Activated CD4-positive, alpha-beta memory T cell treated with anti-CD3 and anti-CD28 coated beads, Interleukin-2, amount 10 ng/mL, durations not matched to agents 7 days and 5 days (primary cell): ENCODE measurements at regions of chr1 and their contacts with region 1.

Region 1: GRCh38 chr1:111227851-111228747 is 586 bp downstream of the CHI3L2 start:
- DNase-seq: no peak
- H3K4me3 Mint-ChIP-seq: no peak overlapping the region
- H3K27ac Mint-ChIP-seq: no peak overlapping the region
- H3K4me1 Mint-ChIP-seq: peaks cover 59% of the 10 kb centered on the region
- H3K27me3 Mint-ChIP-seq: no peaks in the 10 kb centered on the region

Region 2: GRCh38 chr1:111127923-111128643 is 100.0 kb before region 1 on chr1:
- CTCF ChIA-PET with region 1: no interaction called
- POLR2A ChIA-PET with region 1: no interaction called
- DNase-seq: no peak
- H3K4me3 Mint-ChIP-seq: no peak overlapping the region
- H3K27ac Mint-ChIP-seq: no peak overlapping the region
- H3K4me1 Mint-ChIP-seq: peaks cover 20% of the 10 kb centered on the region
- H3K27me3 Mint-ChIP-seq: no peaks in the 10 kb centered on the region

Region 3: DNA sequence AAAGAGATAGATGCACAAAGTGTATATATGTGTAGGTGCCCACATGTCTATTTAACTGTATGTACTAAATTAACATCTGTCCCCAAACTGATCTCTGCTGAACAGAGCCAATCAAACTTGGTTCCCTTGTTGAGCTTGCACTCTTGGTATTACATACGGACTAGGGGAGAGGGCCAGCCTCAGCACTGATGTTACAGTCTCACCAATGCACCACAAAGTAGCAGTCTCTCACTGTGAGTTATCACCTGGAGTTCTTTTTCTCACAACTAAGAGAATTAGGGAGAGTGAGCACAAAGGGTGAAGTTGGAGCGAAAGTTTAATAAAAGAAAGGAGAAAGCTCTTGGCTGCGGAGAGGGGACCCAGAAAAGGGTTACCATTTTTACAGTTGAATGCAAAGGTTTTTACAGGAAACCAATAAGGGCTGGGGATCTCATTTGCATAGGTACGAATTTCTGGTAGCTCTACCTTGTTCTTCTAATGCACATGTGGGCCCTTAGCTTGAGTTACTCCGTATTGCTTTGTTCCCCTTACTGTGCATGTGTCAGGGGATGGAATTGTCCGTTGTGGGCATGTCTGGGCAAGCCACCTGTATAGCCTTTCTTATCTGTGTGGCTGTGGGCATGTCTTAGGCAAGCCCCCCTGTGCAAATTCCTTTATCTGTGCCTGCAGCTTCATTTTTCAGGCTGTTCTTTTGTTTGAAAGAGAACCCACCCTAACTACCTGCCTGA is 13.9 kb before region 1 on chr1:
- CTCF ChIA-PET with region 1: interaction called, 17 read pairs
- POLR2A ChIA-PET with region 1: interaction called, 28 read pairs
- DNase-seq: no peak
- H3K4me3 Mint-ChIP-seq: peak overlapping the region; percentile 52
- H3K27ac Mint-ChIP-seq: peak overlapping the region; percentile 97
- H3K4me1 Mint-ChIP-seq: peaks cover 73% of the 10 kb centered on the region
- H3K27me3 Mint-ChIP-seq: no peaks in the 10 kb centered on the region

Region 4: GRCh38 chr1:111290630-111291029 is 62.5 kb after region 1 on chr1 and contains the start of gene CHIA:
- CTCF ChIA-PET with region 1: no interaction called
- POLR2A ChIA-PET with region 1: no interaction called
- DNase-seq: no peak
- H3K4me3 Mint-ChIP-seq: no peak within 1 kb of the TSS
- H3K27ac Mint-ChIP-seq: no peak within 1 kb of the TSS
- H3K4me1 Mint-ChIP-seq: no peaks in the 10 kb centered on the region
- H3K27me3 Mint-ChIP-seq: peaks cover 4% of the 10 kb centered on the region
- total RNA-seq, gene CHIA: not detected